ENCODE measurements at regions of chr11 and their contacts with region 1.

Region 1: GRCh38 chr11:121328967-121329679 is 36.6 kb downstream of the SC5D start:
- DNase-seq: peak; percentile 34
- CTCF ChIP-seq: no peak

Region 2: GRCh38 chr11:121063728-121064127 is 265.4 kb before region 1 on chr11:
- in situ Hi-C with region 1: no loop called
- DNase-seq: no peak
- CTCF ChIP-seq: no peak

Region 3: GRCh38 chr11:121426476-121427399 is 97.6 kb after region 1 on chr11:
- in situ Hi-C with region 1: loop called (anchors 5 kb)
- DNase-seq: peak; percentile 74
- CTCF ChIP-seq: peak; percentile 26

Region 4: GRCh38 chr11:121762820-121763219 is 433.7 kb after region 1 on chr11:
- in situ Hi-C with region 1: no loop called
- DNase-seq: no peak
- CTCF ChIP-seq: no peak